Posterior cingulate gyrus (tissue), 11 donors: ENCODE measurements at regions of chr7 and their contacts with region 1.

Region 1: GRCh38 chr7:116809636-116810266 is 52.6 kb upstream of the CAPZA2 start:
- DNase-seq: peak in 1 of 10 donors; percentile 24

Region 2: DNA sequence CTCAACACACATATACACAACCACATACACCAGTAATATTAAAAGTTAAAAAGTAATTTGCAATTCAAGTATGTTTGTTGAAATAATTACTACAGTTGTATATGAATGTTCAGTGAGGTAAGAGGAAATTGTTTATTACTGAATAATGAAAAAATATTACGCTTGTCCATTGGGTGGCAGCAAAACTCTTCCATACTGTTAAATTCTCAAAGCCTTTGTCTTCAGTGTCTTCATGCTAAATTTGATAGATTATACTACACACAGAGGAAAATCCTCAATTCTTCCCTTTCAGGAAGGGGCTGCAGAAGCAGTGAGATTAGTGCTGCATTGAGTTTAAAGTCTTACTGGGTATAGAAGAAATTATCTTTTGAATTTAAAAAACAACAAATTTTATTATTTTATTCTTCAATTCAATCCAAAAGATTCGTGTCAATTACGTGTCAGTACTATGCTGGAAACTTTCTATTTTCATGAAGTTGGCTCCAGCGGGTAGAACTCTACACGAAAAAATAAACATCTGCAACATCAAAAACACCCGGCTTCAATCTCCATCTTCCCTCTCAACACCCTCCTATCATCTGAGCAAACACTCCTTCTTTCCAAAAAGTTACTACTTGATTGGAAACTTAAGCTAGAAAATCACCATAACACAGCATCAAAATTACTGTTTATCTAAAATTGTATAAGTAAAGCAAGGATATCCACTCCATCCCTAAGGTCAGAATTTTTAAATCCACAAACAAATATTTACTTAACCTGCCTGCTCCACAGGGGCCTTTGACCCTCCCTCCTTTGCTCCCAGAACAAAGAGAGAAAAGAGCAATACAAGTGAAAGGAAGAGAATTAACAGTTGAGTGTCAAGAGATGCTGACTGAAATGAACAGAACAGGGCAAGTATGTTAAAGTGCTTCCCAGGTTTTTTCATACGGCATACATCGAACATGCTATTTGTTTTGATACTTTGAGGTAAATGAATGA is 636.4 kb before region 1 on chr7:
- intact Hi-C with region 1: loop called (anchors 1 kb)
- DNase-seq: no peak

Region 3: DNA sequence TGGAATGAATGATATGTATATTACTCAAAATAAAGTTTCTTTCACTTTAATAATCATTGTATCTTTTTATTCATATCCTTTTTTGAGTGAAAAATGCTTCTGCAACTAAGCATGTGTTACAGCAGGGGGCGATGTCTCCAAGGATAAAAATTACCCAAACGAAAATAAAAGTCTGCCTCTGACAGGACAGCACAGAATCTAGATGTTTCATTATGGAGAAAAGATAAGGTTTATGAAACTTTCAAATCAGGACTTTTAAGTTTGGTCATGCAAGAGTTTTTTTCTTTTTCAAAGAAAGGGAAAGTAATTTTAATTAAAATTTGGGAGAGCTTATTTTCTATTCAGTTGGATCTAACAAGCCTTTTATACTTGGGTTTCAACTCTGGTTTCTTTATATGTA is 551.0 kb before region 1 on chr7:
- intact Hi-C with region 1: loop called (anchors 2 kb)
- DNase-seq: peak in 1 of 10 donors; percentile 24

Region 4: DNA sequence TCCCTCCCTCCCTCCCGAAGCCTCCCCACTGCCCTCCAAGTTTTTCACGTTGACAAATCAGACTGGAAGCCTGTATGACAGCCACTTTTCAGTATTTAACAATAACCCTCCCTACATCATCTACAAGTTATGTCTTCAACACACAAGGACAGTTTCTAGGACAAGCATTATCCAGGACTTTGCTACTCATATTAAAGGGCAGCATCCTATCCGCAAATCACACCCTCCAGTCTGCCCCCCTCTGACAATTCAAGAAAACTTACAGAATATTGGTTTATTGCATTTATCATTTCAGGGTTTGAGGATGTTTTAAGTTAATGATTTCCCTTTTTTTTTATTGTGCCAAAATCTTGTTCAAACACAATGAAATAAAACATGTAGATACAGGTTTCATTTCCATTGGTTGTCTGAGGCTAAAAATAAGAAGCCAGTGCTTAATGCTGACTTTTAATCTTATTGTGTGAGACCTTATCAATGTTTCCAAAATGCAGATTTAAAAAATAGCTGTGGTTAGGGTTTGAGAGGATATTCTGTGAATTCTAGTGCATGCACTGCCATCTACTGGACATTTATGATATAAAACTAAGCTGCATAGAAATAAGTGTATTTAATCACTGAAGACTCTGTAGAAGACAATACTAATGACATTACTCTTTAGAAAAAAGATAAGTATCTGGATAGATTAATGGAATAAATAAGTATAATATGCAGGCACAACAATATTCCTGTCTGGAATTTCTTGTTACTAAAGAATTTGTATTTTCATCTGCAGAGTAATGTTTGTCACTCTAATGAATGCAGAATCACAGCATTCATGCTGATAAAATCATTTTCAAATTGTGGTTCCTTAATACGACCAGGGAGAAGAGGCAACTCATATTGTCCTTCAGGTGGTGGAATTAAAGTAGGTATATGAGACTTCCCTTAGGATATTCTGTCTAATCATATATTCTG is 220.8 kb before region 1 on chr7:
- intact Hi-C with region 1: loop called (anchors 1 kb)
- DNase-seq: no peak

Region 5: DNA sequence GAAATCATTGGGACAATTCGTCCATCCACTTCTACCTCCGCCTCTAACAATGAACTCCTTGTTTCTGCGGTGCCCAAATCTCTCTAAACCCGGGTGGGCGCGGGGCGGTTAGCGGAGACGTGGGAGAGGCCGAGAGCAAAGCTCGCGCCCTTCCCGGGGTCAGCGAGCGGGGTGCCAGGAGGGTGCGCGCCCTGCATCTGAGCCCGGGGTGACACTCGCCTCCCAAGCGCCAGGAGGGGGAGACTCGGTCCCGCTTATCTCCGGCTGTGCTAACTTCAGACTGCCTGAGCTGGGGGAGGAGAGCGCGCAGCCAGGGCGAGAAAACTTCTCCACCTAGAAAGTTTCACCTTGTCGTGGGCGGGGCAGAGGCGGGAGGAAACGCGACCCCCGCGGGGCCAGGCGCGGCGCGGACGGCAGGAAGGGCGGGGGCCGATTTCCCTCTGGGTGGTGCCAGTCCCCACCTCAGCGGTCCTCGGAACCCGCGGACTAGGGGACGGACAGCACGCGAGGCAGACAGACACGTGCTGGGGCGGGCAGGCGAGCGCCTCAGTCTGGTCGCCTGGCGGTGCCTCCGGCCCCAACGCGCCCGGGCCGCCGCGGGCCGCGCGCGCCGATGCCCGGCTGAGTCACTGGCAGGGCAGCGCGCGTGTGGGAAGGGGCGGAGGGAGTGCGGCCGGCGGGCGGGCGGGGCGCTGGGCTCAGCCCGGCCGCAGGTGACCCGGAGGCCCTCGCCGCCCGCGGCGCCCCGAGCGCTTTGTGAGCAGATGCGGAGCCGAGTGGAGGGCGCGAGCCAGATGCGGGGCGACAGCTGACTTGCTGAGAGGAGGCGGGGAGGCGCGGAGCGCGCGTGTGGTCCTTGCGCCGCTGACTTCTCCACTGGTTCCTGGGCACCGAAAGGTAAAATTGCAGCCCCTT is 137.8 kb before region 1 on chr7 and contains the start of gene MET:
- intact Hi-C with region 1: loop called (anchors 1 kb)
- DNase-seq: peak; percentile 22 to 96 (median 64)

Region 6: DNA sequence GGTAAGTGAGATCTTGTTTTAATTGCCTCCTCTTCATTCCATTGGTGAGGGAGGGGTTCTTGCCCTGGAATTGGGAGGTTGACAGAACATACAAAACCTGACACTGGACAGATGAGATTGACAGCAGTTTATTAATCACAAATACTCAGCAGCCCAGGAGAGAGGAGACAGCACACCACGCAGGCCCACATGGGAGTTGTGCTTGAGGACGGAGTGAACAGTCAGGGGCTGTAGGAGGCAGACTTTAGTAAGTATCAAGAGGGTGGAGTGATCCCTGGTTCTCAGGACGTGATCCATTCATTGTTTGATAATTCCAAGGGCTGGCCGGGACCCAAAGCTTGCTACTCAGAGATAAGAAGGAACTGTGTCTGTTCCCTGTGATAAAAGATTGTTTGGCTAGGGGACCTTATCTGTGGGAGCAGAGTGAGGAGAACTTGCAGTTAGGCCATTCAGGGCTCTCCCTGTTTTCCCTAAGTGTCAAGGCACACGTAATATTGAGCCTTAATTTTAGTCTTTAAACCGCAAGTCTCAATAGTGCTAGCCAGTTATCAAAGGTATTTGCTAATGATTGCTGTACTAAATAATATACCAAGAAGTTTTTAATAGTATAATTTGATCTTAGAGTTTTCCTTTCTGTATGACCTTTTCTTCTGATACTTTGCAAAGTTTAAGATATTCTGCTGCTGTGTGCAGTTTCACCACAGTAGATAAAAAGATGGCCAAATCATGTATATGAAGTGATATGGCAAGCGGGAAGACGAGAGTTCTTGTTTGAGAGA is 67.1 kb after region 1 on chr7:
- intact Hi-C with region 1: no loop called
- DNase-seq: no peak